ENCODE measurements at regions of chr2 and their contacts with region 1.

Region 1: GRCh38 chr2:190880378-190881073 is at the start of gene GLS:
- DNase-seq: peak; percentile 98
- ATAC-seq: peak; percentile 81
- H3K4me3 ChIP-seq: peak within 1 kb of the TSS; percentile 81 to 94 (median 83)
- H3K4me3 Mint-ChIP-seq: peak within 1 kb of the TSS; percentile 99
- H3K27ac ChIP-seq: peak within 1 kb of the TSS; percentile 84 to 87
- H3K27ac Mint-ChIP-seq: peak within 1 kb of the TSS; percentile 99
- H3K4me1 ChIP-seq: peaks cover 38 to 40% of the 10 kb centered on the region in 2 donors
- H3K4me1 Mint-ChIP-seq: peaks cover 43% of the 10 kb centered on the region
- H3K27me3 ChIP-seq: no peaks in the 10 kb centered on the region
- H3K27me3 Mint-ChIP-seq: no peaks in the 10 kb centered on the region
- CTCF ChIP-seq: no peak
- total RNA-seq, gene GLS: 194 and 195 TPM in 2 replicates

Region 2: GRCh38 chr2:190319555-190320498 is 560.7 kb before region 1 on chr2 and contains the start of gene HIBCH:
- CTCF ChIA-PET with region 1: no interaction called
- POLR2A ChIA-PET with region 1: interaction called, 3 read pairs
- intact Hi-C with region 1: loop called (anchors 1 kb)
- DNase-seq: peak; percentile 85
- ATAC-seq: peak; percentile 94
- H3K4me3 ChIP-seq: peak within 1 kb of the TSS; percentile 73 to 87 (median 79)
- H3K4me3 Mint-ChIP-seq: peak within 1 kb of the TSS; percentile 95
- H3K27ac ChIP-seq: peak within 1 kb of the TSS; percentile 80 to 84
- H3K27ac Mint-ChIP-seq: peak within 1 kb of the TSS; percentile 95
- H3K4me1 ChIP-seq: peaks cover 20 to 26% of the 10 kb centered on the region in 2 donors
- H3K4me1 Mint-ChIP-seq: peaks cover 42% of the 10 kb centered on the region
- H3K27me3 ChIP-seq: no peaks in the 10 kb centered on the region
- H3K27me3 Mint-ChIP-seq: peaks cover 8% of the 10 kb centered on the region
- CTCF ChIP-seq: peak; percentile 77
- total RNA-seq, gene HIBCH: 30.2 and 36.9 TPM in 2 replicates

Region 3: DNA sequence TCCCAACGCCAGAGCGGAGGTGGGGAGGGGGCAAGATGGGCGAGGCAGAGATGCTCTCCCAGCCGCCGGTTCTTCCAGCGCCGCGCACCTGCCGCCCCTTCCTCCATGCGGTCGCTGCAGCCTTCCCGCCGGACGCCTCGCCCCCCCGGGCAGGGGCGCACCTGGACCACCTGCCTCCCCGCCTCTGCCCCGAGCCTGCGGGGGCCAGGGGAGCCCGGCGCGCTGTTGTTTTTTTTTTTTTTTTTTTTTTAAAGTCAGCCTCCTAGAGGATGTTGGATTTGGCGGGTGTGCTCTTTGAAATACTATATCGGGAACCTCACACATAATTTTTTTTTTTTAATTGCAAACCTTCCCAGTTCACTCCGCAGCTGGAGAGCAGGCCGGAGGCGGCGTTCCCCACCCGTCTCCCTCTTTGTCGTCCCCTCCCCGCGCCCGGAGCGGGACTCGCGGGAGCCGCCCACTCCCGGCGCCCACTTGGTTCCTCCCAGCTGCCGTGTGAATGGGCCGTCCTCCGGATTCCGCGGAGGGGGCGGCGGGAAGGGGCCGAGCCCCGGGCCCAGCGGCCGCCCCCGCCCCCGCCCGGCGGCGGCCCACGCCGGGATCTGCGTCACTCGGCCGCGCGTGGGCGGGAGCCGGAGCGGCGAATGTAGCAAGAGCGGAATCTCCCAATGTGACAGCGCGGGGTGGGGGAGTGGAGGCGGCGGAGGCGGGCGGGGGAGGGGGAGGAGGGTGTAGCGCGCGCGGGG is 232.1 kb before region 1 on chr2:
- CTCF ChIA-PET with region 1: no interaction called
- POLR2A ChIA-PET with region 1: interaction called, 6 read pairs
- intact Hi-C with region 1: loop called (anchors 2 kb)
- DNase-seq: peak; percentile 94
- ATAC-seq: peak; percentile 77
- H3K4me3 ChIP-seq: peak overlapping the region; percentile 34 to 89 (median 68)
- H3K4me3 Mint-ChIP-seq: peak overlapping the region; percentile 89
- H3K27ac ChIP-seq: peak overlapping the region; percentile 66 to 82
- H3K27ac Mint-ChIP-seq: peak overlapping the region; percentile 82
- H3K4me1 ChIP-seq: peaks cover 8 to 14% of the 10 kb centered on the region in 2 donors
- H3K4me1 Mint-ChIP-seq: peaks cover 25% of the 10 kb centered on the region
- H3K27me3 ChIP-seq: no peaks in the 10 kb centered on the region
- H3K27me3 Mint-ChIP-seq: no peaks in the 10 kb centered on the region
- CTCF ChIP-seq: no peak

Region 4: GRCh38 chr2:190804182-190804795 is 76.2 kb before region 1 on chr2:
- CTCF ChIA-PET with region 1: no interaction called
- POLR2A ChIA-PET with region 1: no interaction called
- intact Hi-C with region 1: no loop called
- DNase-seq: peak; percentile 5
- ATAC-seq: no peak
- H3K4me3 ChIP-seq: no peak overlapping the region
- H3K4me3 Mint-ChIP-seq: no peak overlapping the region
- H3K27ac ChIP-seq: no peak overlapping the region
- H3K27ac Mint-ChIP-seq: no peak overlapping the region
- H3K4me1 ChIP-seq: no peaks in the 10 kb centered on the region
- H3K4me1 Mint-ChIP-seq: peaks cover 9% of the 10 kb centered on the region
- H3K27me3 ChIP-seq: no peaks in the 10 kb centered on the region
- H3K27me3 Mint-ChIP-seq: no peaks in the 10 kb centered on the region
- CTCF ChIP-seq: peak; percentile 53

Region 5: DNA sequence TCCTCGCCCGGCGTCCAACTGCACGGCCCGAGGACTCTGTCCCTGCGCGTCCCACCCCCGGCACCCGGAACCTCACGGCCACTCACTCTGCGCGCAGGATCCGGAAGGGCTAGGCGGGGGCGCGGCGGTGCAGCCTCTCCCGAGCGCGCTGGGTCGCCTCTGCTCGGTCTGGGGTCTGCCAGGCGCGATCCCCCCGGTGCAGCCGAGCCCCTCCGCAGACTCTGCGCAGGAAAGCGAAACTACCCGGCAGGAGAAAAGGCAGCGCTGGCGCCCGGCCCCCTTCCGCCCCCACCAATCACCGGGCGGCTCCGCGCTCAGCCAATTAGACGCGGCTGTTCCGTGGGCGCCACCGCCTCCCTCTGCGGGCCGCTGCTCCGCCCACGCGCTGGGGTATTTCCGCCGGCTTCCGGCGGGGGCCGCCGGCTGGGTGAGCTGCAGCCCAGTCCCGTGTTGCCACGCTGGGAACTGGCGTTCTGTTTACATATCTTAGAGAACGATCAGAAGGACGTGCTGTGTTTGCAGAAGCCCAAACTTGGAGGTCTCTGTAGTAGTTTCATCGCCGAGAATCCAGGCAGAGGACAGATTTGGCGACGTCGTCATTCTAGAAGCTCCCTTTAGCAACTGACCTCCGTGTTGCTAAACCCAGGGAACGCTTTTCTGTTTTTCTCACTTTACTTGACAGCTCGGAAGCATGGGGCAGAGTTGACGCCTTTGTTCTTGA is 133.6 kb after region 1 on chr2 and contains the start of gene STAT1:
- CTCF ChIA-PET with region 1: no interaction called
- POLR2A ChIA-PET with region 1: no interaction called
- intact Hi-C with region 1: loop called (anchors 1 kb)
- DNase-seq: peak; percentile 96
- ATAC-seq: peak; percentile 93
- H3K4me3 ChIP-seq: peak within 1 kb of the TSS; percentile 81 to 96 (median 92)
- H3K4me3 Mint-ChIP-seq: no peak within 1 kb of the TSS
- H3K27ac ChIP-seq: peak within 1 kb of the TSS; percentile 84 to 93
- H3K27ac Mint-ChIP-seq: no peak within 1 kb of the TSS
- H3K4me1 ChIP-seq: peaks cover 35 to 42% of the 10 kb centered on the region in 2 donors
- H3K4me1 Mint-ChIP-seq: peaks cover 23% of the 10 kb centered on the region
- H3K27me3 ChIP-seq: no peaks in the 10 kb centered on the region
- H3K27me3 Mint-ChIP-seq: no peaks in the 10 kb centered on the region
- CTCF ChIP-seq: no peak
- total RNA-seq, gene STAT1: 50.9 and 53.8 TPM in 2 replicates

Region 6: DNA sequence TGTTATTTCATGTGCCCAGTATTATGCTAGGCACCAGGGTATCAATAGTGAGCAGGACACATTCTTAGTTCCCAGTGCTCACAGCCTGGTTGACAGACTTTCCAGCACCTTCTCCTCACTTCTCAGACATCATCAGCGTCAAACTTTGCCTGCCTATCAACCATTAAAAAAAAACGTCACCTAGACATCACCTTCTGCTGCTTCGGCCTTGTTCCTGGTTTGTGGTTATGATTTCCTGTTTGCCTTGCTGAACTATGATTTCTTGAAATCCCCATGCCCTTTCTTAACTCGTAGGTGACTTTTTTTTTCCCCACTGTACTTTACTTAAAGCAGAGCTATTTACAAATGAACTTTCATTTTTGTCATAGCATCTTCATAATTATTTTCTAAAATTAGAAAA is 737.0 kb after region 1 on chr2:
- CTCF ChIA-PET with region 1: no interaction called
- POLR2A ChIA-PET with region 1: interaction called, 4 read pairs
- intact Hi-C with region 1: loop called (anchors 5 kb)
- DNase-seq: peak; percentile 88
- ATAC-seq: peak; percentile 95
- H3K4me3 ChIP-seq: peak overlapping the region in 1 of 5 experiments; percentile 2
- H3K4me3 Mint-ChIP-seq: peak overlapping the region; percentile 62
- H3K27ac ChIP-seq: peak overlapping the region; percentile 77 to 86
- H3K27ac Mint-ChIP-seq: peak overlapping the region; percentile 88
- H3K4me1 ChIP-seq: peaks cover 23 to 29% of the 10 kb centered on the region in 2 donors
- H3K4me1 Mint-ChIP-seq: peaks cover 52% of the 10 kb centered on the region
- H3K27me3 ChIP-seq: no peaks in the 10 kb centered on the region
- H3K27me3 Mint-ChIP-seq: no peaks in the 10 kb centered on the region
- CTCF ChIP-seq: no peak

Measured in B cell (primary cell).